Activated CD4-positive, alpha-beta T cell treated with anti-CD3 and anti-CD28 coated beads for 36 hours (primary cell): ENCODE measurements at regions of chr19 and their contacts with region 1.

Region 1: DNA sequence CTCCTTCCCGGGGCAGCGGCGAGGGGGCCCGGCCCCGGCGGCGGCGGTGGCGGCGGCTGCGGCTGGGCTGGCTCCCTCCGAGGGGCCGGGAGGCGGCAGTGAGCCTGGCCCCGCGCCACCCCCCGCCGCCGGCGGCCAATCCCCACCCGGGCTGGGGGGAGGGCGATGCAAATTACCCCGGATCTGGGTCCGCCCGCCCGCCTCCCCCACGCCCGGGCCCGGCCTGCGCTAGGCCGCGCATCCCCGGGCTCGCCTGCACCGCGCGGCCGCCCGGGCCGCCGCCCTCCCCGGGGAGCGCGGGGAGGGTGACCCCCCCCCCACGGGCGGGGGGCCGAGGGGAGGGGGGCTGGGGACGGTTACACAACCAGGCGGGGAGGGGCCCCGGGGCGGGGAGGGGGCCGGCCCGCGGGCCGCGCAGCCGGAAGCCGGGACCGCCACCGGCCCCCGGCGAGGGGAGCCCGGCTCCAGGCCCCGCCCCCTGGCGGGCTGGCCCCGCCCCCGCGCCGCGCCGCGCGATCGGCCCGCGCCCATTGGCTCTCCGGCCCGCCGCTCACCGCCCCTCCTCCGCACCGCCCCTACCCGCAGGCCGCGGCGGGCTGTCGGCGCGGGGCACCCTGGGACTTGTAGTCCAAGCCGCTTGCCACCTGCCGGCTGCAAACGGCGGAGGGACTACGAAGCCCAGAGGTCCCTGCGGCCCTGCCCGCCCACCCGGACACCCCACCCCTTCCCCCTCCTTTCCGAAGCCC is 1.1 kb downstream of the ZBTB7A start:
- DNase-seq: peak; percentile 99
- ATAC-seq: peak; percentile 84
- H3K4me3 Mint-ChIP-seq: peak overlapping the region; percentile 71
- H3K27ac Mint-ChIP-seq: no peak overlapping the region
- H3K4me1 Mint-ChIP-seq: peaks cover 40% of the 10 kb centered on the region
- H3K27me3 Mint-ChIP-seq: no peaks in the 10 kb centered on the region

Region 2: DNA sequence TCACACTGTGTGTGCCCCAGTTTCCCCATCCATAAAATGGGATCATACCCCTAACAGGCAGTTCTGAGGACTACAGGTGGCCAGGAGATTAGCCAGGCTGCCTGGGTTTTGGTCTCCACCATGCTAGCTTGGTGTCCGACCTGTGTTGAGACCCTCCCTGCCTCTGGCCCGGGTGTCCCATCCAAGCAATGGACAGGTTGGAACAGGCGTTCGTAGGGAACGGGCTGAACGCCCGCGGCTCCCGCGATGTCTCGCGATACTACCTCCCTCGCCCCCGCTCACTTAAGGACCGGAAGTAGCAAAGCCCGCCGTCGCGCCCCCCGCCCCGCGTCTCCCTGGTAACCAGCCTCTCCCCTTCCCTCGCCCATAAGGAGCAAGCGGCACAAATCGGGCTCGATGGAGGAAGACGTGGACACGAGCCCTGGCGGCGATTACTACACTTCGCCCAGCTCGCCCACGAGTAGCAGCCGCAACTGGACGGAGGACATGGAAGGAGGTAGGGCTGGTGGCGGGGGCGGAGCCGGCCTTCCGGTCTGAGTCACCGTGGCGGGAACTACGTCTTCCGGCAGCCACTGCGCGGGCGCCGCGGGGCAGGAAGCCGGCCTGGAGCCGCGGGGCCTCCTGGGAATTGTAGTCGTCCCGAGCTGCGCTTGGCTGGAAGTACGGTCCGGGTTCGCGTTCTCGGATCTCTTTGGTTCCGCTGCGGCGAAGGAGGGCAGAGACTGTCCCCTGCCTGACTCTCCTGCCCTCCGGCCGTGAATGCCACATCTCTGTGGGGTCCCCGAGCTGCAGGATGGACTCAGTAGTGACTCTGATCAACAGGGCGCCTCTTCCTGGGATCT is 630.7 kb before region 1 on chr19:
- CTCF ChIA-PET with region 1: no interaction called
- POLR2A ChIA-PET with region 1: no interaction called
- intact Hi-C with region 1: loop called in 1 of 2 experiments (anchors 2 kb)
- DNase-seq: peak; percentile 98
- ATAC-seq: peak; percentile 96
- H3K4me3 Mint-ChIP-seq: peak overlapping the region; percentile 84
- H3K27ac Mint-ChIP-seq: peak overlapping the region; percentile 99
- H3K4me1 Mint-ChIP-seq: peaks cover 13% of the 10 kb centered on the region
- H3K27me3 Mint-ChIP-seq: no peaks in the 10 kb centered on the region

Region 3: GRCh38 chr19:3970808-3971598 is 94.6 kb before region 1 on chr19 and contains the start of gene DAPK3:
- CTCF ChIA-PET with region 1: no interaction called
- POLR2A ChIA-PET with region 1: no interaction called
- intact Hi-C with region 1: loop called in 1 of 2 experiments (anchors 1 kb)
- DNase-seq: peak; percentile 97
- ATAC-seq: peak; percentile 95
- H3K4me3 Mint-ChIP-seq: peak within 1 kb of the TSS; percentile 83
- H3K27ac Mint-ChIP-seq: peak within 1 kb of the TSS; percentile 58
- H3K4me1 Mint-ChIP-seq: peaks cover 22% of the 10 kb centered on the region
- H3K27me3 Mint-ChIP-seq: no peaks in the 10 kb centered on the region
- total RNA-seq, gene DAPK3: 26.7 to 27.6 TPM

Region 4: DNA sequence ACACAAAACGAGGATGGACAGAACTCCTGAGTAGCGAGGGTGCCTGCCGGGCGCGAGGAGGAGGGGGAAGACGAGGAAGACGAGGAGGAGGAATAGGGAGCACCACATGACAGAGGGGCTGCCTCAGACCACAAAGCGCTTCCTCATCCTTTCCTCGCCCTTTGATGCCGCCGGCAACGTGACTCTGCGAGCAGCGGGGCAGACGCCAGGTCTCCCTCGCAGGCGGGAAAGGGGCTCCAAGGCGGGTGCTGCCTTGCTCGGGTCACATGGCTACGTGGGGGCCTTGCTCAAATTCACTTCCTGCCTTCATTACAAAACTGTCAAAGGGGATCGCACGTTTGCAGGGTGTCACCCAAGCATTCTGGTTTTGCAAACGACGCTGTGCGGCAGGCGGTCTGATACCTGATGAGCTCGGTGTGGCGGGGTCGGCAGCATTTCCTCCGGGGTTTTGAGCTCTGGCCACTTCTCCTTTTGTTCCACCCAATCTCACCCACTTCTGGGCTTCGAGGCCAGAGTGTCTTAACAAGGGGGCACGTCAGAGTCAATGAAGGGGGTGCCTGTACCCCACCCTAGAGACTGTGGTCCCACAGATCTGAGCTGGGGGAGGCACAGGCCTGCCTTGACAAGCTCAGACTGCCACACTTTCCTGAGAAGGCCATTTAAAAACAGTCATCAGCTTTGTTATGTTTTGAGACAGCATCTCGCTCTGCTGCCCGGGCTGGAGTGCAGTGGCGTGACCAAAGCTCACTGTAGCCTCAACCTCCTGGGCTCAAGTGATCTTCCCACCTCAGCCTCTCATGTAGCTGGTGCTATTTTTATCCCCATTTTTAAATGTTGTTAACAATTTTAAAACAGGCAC is 43.4 kb after region 1 on chr19:
- CTCF ChIA-PET with region 1: no interaction called
- POLR2A ChIA-PET with region 1: interaction called, 3 read pairs
- intact Hi-C with region 1: loop called (anchors 2 to 5 kb)
- DNase-seq: peak; percentile 76
- ATAC-seq: peak; percentile 70
- H3K4me3 Mint-ChIP-seq: no peak overlapping the region
- H3K27ac Mint-ChIP-seq: peak overlapping the region; percentile 94
- H3K4me1 Mint-ChIP-seq: peaks cover 51% of the 10 kb centered on the region
- H3K27me3 Mint-ChIP-seq: no peaks in the 10 kb centered on the region

Region 5: GRCh38 chr19:4328243-4328990 is 262.8 kb after region 1 on chr19:
- CTCF ChIA-PET with region 1: no interaction called
- POLR2A ChIA-PET with region 1: no interaction called
- intact Hi-C with region 1: loop called in 1 of 2 experiments (anchors 5 kb)
- DNase-seq: peak; percentile 100
- ATAC-seq: peak; percentile 85
- H3K4me3 Mint-ChIP-seq: peak overlapping the region; percentile 93
- H3K27ac Mint-ChIP-seq: peak overlapping the region; percentile 94
- H3K4me1 Mint-ChIP-seq: peaks cover 27% of the 10 kb centered on the region
- H3K27me3 Mint-ChIP-seq: no peaks in the 10 kb centered on the region

Region 6: DNA sequence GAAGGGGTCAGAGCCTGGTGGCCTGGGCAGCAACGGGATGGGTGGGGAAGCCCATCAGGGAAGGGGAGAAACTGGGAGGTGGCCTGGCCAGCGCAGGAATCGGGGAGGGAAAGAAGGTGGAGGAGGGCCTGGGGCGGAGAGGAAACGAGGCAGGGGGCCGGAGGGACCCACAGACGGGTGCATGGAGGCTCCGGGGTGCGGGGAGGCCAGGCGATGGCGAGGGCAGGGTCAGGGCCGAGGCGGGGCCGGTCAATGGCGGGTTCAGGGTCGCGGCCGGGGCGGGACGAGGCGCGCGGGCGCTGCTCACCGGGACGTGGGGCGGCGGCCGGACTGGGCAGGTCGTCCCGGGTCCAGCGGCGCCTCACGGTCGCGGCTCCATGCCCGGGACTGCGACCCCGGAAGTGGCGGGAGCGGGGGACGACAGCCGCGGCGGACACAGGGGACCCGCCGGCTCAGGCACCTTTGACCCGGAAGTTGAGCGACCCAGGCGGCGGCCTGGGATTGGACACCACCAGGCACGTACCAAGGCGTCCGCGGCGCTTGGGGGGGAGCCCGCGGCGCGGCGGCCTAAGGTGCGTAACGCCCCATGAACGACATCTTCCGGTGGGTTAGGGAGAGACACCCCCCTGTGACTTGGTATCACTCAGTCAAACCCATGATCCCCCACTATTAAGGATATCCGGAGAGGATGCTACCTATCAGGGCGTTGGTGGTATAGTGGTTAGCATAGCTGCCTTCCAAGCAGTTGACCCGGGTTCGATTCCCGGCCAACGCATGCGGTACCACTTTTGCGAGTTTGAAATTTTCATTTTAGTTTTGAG is 658.0 kb after region 1 on chr19 and contains the start of gene DPP9:
- CTCF ChIA-PET with region 1: no interaction called
- POLR2A ChIA-PET with region 1: no interaction called
- intact Hi-C with region 1: loop called in 1 of 2 experiments (anchors 5 kb)
- DNase-seq: peak; percentile 98
- ATAC-seq: peak; percentile 95
- H3K4me3 Mint-ChIP-seq: peak within 1 kb of the TSS; percentile 92
- H3K27ac Mint-ChIP-seq: peak within 1 kb of the TSS; percentile 93
- H3K4me1 Mint-ChIP-seq: peaks cover 26% of the 10 kb centered on the region
- H3K27me3 Mint-ChIP-seq: no peaks in the 10 kb centered on the region
- total RNA-seq, gene DPP9: 49.2 to 51.3 TPM